Caco-2 (cell line): ENCODE measurements at regions of chr15 and their contacts with region 1.

Region 1: DNA sequence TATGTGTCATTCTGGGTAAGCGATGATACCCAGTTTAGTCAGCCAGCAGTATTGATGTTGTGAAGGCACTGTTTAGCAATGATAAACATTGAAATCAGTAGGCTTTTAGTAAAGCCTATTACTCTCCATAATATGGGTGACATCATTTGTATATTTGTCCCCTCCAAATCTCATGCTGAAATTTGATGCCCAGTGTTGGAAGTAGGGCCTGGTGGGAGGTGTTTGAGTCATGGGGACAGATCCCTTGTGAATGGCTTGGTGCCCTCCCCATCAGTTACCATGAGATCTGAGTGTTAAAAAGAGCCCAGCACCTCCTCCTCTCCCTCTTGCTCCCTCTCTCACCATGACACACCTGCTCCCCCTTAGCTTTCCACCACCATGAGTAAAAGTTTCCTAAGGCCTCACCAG is 31.4 kb upstream of the FAN1 start:
- DNase-seq: no peak
- H3K4me3 ChIP-seq: no peak overlapping the region
- H3K4me3 Mint-ChIP-seq: no peak overlapping the region
- H3K27ac Mint-ChIP-seq: no peak overlapping the region
- H3K4me1 ChIP-seq: no peaks in the 10 kb centered on the region
- H3K4me1 Mint-ChIP-seq: no peaks in the 10 kb centered on the region
- H3K27me3 ChIP-seq: no peaks in the 10 kb centered on the region
- H3K27me3 Mint-ChIP-seq: no peaks in the 10 kb centered on the region
- CTCF ChIP-seq: no peak

Region 2: DNA sequence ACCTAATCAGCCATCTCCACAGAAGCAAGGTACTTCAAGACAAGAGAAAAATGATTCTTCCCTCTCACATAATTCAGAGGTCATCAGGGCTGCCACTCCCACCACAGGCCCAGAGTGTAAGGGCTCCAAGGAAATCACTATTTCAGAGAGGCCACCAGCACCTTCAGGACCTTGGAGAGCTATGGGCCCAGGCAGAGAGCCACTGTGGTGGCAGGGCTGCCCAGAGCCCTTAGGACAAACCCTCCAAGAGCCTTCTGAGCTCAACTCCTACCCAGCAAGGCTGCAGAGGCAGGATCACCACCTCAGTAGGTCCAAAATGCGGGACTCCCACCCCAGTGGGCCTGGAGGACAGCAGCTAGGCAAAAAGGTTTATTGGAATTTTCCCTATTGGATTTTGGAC is 13.5 kb after region 1 on chr15:
- CTCF ChIA-PET with region 1: no interaction called
- POLR2A ChIA-PET with region 1: no interaction called
- intact Hi-C with region 1: no loop called
- DNase-seq: peak in 1 of 2 experiments; percentile 60
- H3K4me3 ChIP-seq: no peak overlapping the region
- H3K4me3 Mint-ChIP-seq: no peak overlapping the region
- H3K27ac Mint-ChIP-seq: no peak overlapping the region
- H3K4me1 ChIP-seq: no peaks in the 10 kb centered on the region
- H3K4me1 Mint-ChIP-seq: no peaks in the 10 kb centered on the region
- H3K27me3 ChIP-seq: no peaks in the 10 kb centered on the region
- H3K27me3 Mint-ChIP-seq: peaks cover 4% of the 10 kb centered on the region
- CTCF ChIP-seq: no peak

Region 3: DNA sequence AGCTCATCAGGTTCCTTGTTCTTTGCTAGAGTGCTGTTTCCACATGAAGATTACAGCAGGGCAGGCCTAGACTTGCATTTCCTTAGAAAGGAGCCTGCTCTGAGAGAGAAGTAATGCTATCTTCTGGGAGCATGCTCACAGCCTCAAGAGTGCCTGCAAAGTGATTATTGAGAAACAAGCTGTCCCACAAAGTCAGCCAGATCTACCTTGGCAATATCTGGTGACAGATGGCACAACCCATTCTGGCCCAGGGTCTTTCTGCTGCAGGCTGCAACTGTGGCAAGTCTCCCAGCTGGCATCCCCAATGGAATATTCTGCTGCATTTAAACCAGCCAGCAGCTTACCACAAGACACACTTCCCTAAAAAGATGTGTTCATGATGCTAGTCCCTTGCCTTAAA is 89.7 kb after region 1 on chr15:
- CTCF ChIA-PET with region 1: no interaction called
- POLR2A ChIA-PET with region 1: interaction called, 10 read pairs
- intact Hi-C with region 1: no loop called
- DNase-seq: no peak
- H3K4me3 ChIP-seq: no peak overlapping the region
- H3K4me3 Mint-ChIP-seq: no peak overlapping the region
- H3K27ac Mint-ChIP-seq: no peak overlapping the region
- H3K4me1 ChIP-seq: no peaks in the 10 kb centered on the region
- H3K4me1 Mint-ChIP-seq: no peaks in the 10 kb centered on the region
- H3K27me3 ChIP-seq: no peaks in the 10 kb centered on the region
- H3K27me3 Mint-ChIP-seq: no peaks in the 10 kb centered on the region
- CTCF ChIP-seq: no peak